Caco-2 (cell line): ENCODE measurements at regions of chr1 and their contacts with region 1.

Region 1: GRCh38 chr1:47179017-47179987 is 10.5 kb downstream of the PDZK1IP1 start:
- DNase-seq: peak; percentile 93
- H3K4me3 ChIP-seq: peak overlapping the region; percentile 26
- H3K4me3 Mint-ChIP-seq: peak overlapping the region; percentile 67
- H3K27ac Mint-ChIP-seq: peak overlapping the region; percentile 80
- H3K4me1 ChIP-seq: peaks cover 22% of the 10 kb centered on the region; the same call in 1 of the 2 replicates
- H3K4me1 Mint-ChIP-seq: peaks cover 28% of the 10 kb centered on the region
- H3K27me3 ChIP-seq: no peaks in the 10 kb centered on the region
- H3K27me3 Mint-ChIP-seq: no peaks in the 10 kb centered on the region
- CTCF ChIP-seq: peak; percentile 76 to 87

Region 2: GRCh38 chr1:46991083-46991923 is 188.0 kb before region 1 on chr1:
- CTCF ChIA-PET with region 1: no interaction called
- POLR2A ChIA-PET with region 1: no interaction called
- intact Hi-C with region 1: no loop called
- DNase-seq: peak in 1 of 2 experiments; percentile 12
- H3K4me3 ChIP-seq: no peak overlapping the region
- H3K4me3 Mint-ChIP-seq: no peak overlapping the region
- H3K27ac Mint-ChIP-seq: no peak overlapping the region
- H3K4me1 ChIP-seq: no peaks in the 10 kb centered on the region
- H3K4me1 Mint-ChIP-seq: no peaks in the 10 kb centered on the region
- H3K27me3 ChIP-seq: no peaks in the 10 kb centered on the region
- H3K27me3 Mint-ChIP-seq: peaks cover 7% of the 10 kb centered on the region
- CTCF ChIP-seq: peak; percentile 20 to 28

Region 3: GRCh38 chr1:47238935-47239592 is 59.8 kb after region 1 on chr1:
- CTCF ChIA-PET with region 1: interaction called, 5 read pairs
- POLR2A ChIA-PET with region 1: no interaction called
- intact Hi-C with region 1: loop called (anchors 1 kb)
- DNase-seq: no peak
- H3K4me3 ChIP-seq: no peak overlapping the region
- H3K4me3 Mint-ChIP-seq: no peak overlapping the region
- H3K27ac Mint-ChIP-seq: no peak overlapping the region
- H3K4me1 ChIP-seq: peaks cover 11% of the 10 kb centered on the region
- H3K4me1 Mint-ChIP-seq: peaks cover 11% of the 10 kb centered on the region
- H3K27me3 ChIP-seq: no peaks in the 10 kb centered on the region
- H3K27me3 Mint-ChIP-seq: no peaks in the 10 kb centered on the region
- CTCF ChIP-seq: no peak

Region 4: DNA sequence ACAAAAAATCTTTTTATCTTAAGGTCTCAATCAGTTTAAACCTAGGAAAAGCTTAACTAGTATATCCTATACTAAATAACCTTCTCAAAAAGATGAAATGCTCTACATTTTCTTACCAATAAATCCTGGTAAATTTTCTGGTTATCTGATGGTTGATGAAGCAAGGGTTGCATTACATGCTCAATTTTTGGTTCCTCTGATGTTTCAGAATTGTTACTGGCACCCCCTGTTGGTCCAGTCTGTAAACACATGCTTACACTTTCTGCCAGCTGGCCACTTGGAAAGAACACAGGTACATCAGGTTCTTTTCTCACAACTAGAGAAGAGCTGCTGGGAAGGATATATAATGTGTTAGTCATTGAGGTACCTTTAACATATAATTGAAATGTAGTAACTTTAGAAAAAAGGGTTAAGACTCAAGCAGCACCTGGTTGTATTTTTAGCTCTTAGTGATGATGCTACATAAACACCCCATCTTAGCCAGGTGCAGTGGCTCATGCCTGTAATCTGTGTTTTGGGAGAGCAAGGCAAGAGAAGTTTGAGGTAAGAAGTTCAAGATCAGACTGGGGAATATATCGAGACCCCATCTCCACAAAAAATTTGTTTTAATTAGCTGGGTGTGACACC is 83.6 kb after region 1 on chr1:
- CTCF ChIA-PET with region 1: interaction called, 37 read pairs
- POLR2A ChIA-PET with region 1: interaction called, 10 read pairs
- intact Hi-C with region 1: loop called (anchors 1 kb)
- DNase-seq: peak; percentile 46 to 72
- H3K4me3 ChIP-seq: no peak overlapping the region
- H3K4me3 Mint-ChIP-seq: no peak overlapping the region
- H3K27ac Mint-ChIP-seq: no peak overlapping the region
- H3K4me1 ChIP-seq: 0 out of 2 replicates have a peak, but pooled peaks cover 5% of the 10 kb centered on the region
- H3K4me1 Mint-ChIP-seq: peaks cover 11% of the 10 kb centered on the region
- H3K27me3 ChIP-seq: no peaks in the 10 kb centered on the region
- H3K27me3 Mint-ChIP-seq: no peaks in the 10 kb centered on the region
- CTCF ChIP-seq: peak; percentile 58 to 62

Region 5: DNA sequence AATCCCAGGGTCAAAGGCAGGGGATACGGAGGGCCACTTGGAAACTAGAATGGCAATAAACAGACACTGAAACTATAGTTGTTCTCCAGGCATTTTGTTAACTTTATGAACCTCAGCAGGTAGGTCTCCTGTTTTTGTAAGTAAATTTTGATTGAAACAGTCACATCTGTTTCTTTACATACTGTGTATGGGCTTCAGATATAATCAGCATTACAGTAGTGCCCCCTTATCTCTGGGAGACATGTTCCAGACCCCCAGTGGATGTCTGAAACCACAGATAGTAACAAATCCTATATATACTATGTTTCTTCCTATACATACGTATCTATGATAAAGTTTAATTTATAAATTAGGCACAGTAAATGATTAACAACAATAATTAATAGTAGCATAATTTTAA is 123.2 kb after region 1 on chr1:
- CTCF ChIA-PET with region 1: no interaction called
- POLR2A ChIA-PET with region 1: no interaction called
- intact Hi-C with region 1: no loop called
- DNase-seq: no peak
- H3K4me3 ChIP-seq: no peak overlapping the region
- H3K4me3 Mint-ChIP-seq: no peak overlapping the region
- H3K27ac Mint-ChIP-seq: no peak overlapping the region
- H3K4me1 ChIP-seq: no peaks in the 10 kb centered on the region
- H3K4me1 Mint-ChIP-seq: no peaks in the 10 kb centered on the region
- H3K27me3 ChIP-seq: no peaks in the 10 kb centered on the region
- H3K27me3 Mint-ChIP-seq: no peaks in the 10 kb centered on the region
- CTCF ChIP-seq: no peak

Region 6: GRCh38 chr1:47333922-47334764 is 154.8 kb after region 1 on chr1:
- CTCF ChIA-PET with region 1: interaction called, 14 read pairs
- POLR2A ChIA-PET with region 1: interaction called, 7 read pairs
- intact Hi-C with region 1: no loop called
- DNase-seq: peak; percentile 83
- H3K4me3 ChIP-seq: peak overlapping the region; percentile 85
- H3K4me3 Mint-ChIP-seq: no peak overlapping the region
- H3K27ac Mint-ChIP-seq: peak overlapping the region; percentile 93
- H3K4me1 ChIP-seq: no peaks in the 10 kb centered on the region; the same call in 1 of the 2 replicates
- H3K4me1 Mint-ChIP-seq: peaks cover 7% of the 10 kb centered on the region
- H3K27me3 ChIP-seq: no peaks in the 10 kb centered on the region
- H3K27me3 Mint-ChIP-seq: no peaks in the 10 kb centered on the region
- CTCF ChIP-seq: peak; percentile 12 to 28

Region 7: DNA sequence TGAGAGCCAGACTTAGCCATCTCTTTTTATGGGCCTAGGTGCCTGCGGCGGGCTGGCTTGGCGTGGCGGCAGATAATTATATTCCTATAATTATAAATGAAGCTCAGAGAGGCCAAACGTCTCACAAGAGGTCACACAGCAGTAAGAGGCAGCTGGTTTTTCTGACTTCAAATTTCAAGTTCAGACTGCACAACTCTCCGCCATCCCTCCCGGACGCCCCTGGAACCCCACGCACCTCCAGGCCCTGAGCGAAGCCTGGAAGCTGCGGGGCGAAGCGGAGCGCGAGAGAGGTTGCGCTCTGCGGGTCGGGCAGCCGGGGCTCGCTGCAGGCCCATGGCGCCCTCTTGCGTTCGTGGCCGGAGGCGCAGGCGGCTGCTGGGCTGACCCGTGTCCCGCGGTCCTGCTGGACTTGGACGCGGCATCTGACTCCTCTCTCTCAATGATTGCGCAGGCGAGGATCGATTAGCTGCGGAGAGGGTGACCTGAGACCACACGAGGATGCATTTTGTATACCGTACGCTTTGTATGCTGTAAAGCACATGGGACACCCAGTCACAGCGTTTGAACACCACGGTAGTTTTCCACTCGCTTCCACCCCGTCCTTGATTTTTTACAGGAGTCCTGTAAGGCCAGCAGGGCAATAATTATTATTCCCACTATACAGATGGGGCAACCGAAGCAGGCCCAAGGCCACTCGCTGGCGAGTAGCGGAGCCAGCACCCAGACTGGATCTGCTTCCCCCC is 531.2 kb after region 1 on chr1:
- CTCF ChIA-PET with region 1: interaction called, 3 read pairs
- POLR2A ChIA-PET with region 1: no interaction called
- intact Hi-C with region 1: loop called (anchors 10 kb)
- DNase-seq: peak; percentile 60 to 84
- H3K4me3 ChIP-seq: peak overlapping the region; percentile 59
- H3K4me3 Mint-ChIP-seq: peak overlapping the region; percentile 73
- H3K27ac Mint-ChIP-seq: no peak overlapping the region
- H3K4me1 ChIP-seq: 0 out of 2 replicates have a peak, but pooled peaks cover 7% of the 10 kb centered on the region
- H3K4me1 Mint-ChIP-seq: peaks cover 6% of the 10 kb centered on the region
- H3K27me3 ChIP-seq: no peaks in the 10 kb centered on the region
- H3K27me3 Mint-ChIP-seq: peaks cover 4% of the 10 kb centered on the region
- CTCF ChIP-seq: peak; percentile 87 to 89